Heart right ventricle (tissue), 16 donors: ENCODE measurements at regions of chr2 and their contacts with region 1.

Region 1: GRCh38 chr2:3644246-3644525 is 13.8 kb upstream of the ALLC start:
- DNase-seq: no peak
- ATAC-seq: no peak
- H3K4me3 ChIP-seq: no peak overlapping the region
- H3K27ac ChIP-seq: no peak overlapping the region
- H3K4me1 ChIP-seq: no peaks in the 10 kb centered on the region
- H3K27me3 ChIP-seq: no peaks in the 10 kb centered on the region
- CTCF ChIP-seq: no peak

Region 2: GRCh38 chr2:3423492-3424175 is 220.6 kb before region 1 on chr2:
- intact Hi-C with region 1: loop called in 1 of 10 experiments (anchors 10 kb)
- DNase-seq: peak; percentile 57 to 79
- ATAC-seq: peak in 7 of 8 donors; percentile 49 to 67 (median 58)
- H3K4me3 ChIP-seq: no peak overlapping the region
- H3K27ac ChIP-seq: no peak overlapping the region
- H3K4me1 ChIP-seq: peaks cover 0 to 13% (median 0%) of the 10 kb centered on the region in 9 donors
- H3K27me3 ChIP-seq: no peaks in the 10 kb centered on the region
- CTCF ChIP-seq: peak; percentile 88 to 99 (median 98)

Region 3: GRCh38 chr2:3594493-3595281 is 49.5 kb before region 1 on chr2 and contains the start of gene COLEC11:
- intact Hi-C with region 1: loop called in 1 of 10 experiments (anchors 10 kb)
- DNase-seq: peak; percentile 67 to 74
- ATAC-seq: peak; percentile 89 to 94 (median 92)
- H3K4me3 ChIP-seq: peak within 1 kb of the TSS in 9 of 10 donors; percentile 1 to 44 (median 41)
- H3K27ac ChIP-seq: peak within 1 kb of the TSS in 9 of 10 donors; percentile 0 to 72 (median 46)
- H3K4me1 ChIP-seq: peaks cover 0 to 14% (median 11%) of the 10 kb centered on the region in 9 donors
- H3K27me3 ChIP-seq: peaks cover 0 to 5% (median 0%) of the 10 kb centered on the region in 7 donors
- CTCF ChIP-seq: peak in 8 of 9 donors; percentile 11 to 66 (median 50)
- total RNA-seq, gene COLEC11: 2.0 to 7.2 (median 4.1) TPM